Activated CD4-positive, alpha-beta memory T cell treated with anti-CD3 and anti-CD28 coated beads for 36 hours (primary cell): ENCODE measurements at regions of chr17 and their contacts with region 1.

Region 1: GRCh38 chr17:41665566-41666236 is 23.0 kb upstream of the EIF1 start:
- DNase-seq: peak; percentile 94
- H3K4me3 Mint-ChIP-seq: peak overlapping the region; percentile 76
- H3K27ac Mint-ChIP-seq: peak overlapping the region; percentile 95
- H3K4me1 Mint-ChIP-seq: peaks cover 42% of the 10 kb centered on the region
- H3K27me3 Mint-ChIP-seq: no peaks in the 10 kb centered on the region

Region 2: DNA sequence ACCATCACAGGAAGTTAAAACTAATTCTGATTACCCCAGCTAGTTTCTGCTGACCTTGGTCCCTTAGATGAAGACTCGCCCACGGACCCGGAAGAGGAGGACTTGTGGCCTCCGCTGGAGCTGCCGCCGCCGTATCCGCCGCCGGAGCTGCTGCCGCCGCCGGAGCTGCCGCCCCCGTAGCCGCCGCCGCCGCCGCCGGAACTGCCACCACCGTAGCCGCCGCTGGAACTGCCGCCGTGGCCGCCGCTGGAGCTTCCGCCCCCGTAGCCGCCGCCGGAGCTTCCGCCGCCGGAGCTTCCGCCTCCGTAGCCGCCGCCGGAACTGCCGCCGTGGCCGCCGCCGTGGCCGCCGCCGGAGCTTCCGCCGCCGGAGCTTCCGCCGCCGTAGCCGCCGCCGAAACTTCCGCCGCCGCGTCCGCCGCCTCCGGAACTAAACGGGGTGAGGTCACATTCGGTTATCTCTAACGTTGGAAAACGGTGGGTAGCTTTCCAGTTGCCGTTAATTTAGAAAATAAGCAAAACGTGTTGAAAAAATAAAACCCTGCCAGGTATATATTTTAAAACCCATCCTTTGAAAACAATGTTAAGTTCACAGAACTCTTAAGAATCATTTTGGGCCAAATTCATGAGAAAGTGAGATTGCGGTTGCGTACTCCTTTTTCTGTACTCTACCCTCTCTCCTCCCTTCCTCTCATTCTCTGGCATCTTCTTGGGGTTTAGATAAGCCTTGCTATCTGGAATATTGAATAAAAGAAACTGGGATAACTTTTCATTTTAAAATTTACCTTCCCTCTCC is 846.8 kb before region 1 on chr17:
- CTCF ChIA-PET with region 1: interaction called, 13 read pairs
- POLR2A ChIA-PET with region 1: no interaction called
- intact Hi-C with region 1: loop called (anchors 5 kb)
- DNase-seq: peak; percentile 91
- H3K4me3 Mint-ChIP-seq: peak overlapping the region; percentile 87
- H3K27ac Mint-ChIP-seq: peak overlapping the region; percentile 94
- H3K4me1 Mint-ChIP-seq: peaks cover 18% of the 10 kb centered on the region
- H3K27me3 Mint-ChIP-seq: peaks cover 7% of the 10 kb centered on the region

Region 3: DNA sequence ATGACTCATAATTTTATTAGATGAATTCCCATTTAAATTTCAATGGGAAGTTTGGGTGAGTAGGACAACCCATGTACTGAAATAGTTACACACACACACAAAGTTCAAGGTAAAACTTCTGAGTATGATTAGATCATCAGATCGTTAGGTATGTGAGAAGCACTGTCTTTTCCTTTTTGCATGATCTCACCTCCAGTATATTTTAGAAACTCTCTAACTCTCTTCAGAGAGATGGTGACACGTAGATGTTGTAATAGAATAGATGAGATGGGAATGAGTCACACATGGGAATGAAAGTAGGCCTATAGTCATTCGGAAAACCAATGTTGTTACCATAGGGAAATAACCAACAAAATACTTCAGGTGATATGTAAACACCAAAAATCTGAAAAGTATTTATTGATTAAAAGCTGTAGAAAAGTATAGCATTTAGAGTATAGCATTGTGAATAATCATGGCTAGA is 750.5 kb before region 1 on chr17:
- CTCF ChIA-PET with region 1: interaction called, 28 read pairs
- POLR2A ChIA-PET with region 1: no interaction called
- intact Hi-C with region 1: no loop called
- DNase-seq: no peak
- H3K4me3 Mint-ChIP-seq: no peak overlapping the region
- H3K27ac Mint-ChIP-seq: no peak overlapping the region
- H3K4me1 Mint-ChIP-seq: peaks cover 7% of the 10 kb centered on the region
- H3K27me3 Mint-ChIP-seq: peaks cover 3% of the 10 kb centered on the region

Region 4: DNA sequence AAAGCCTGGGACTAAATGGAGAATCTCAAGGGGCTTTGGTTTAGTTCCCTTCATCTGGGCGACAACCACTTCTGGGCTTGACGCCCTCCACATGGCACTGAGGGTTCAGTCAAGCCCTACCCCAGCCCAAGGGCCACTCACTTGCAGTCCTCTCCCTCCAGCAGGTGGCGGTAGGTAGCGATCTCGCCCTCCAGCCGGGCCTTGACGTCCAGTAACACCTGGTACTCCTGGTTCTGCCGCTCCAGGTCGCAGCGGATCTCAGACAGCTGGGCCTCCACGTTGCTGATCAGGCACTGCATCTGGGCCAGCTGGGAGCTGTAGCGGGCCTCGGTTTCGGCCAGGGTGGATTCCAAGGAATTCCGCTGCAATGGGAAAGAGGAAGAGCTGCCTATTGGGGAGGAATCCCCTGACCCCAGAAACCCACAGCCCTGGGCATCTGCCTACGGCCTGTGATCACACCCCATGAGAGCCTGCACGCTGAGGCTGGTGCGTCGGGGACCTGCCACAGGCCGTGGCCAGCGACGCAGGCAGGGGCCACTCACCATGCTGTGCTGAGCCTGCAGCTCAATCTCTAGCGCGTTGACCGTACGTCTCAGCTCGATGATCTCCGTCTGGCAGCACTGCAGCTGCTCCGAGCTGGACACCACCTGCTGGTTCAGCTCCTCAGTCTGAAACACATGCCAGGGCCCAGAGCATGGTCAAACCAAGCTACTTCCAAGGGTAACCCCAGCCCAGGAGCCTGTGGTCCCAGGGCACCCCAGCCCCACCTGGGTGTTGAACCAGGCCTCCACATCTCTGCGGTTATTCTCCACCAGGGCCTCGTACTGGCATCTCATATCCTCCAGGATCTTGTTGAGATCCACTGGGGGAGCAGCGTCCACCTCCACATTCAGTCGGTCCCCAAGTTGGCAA is 178.6 kb before region 1 on chr17:
- CTCF ChIA-PET with region 1: interaction called, 15 read pairs
- POLR2A ChIA-PET with region 1: no interaction called
- intact Hi-C with region 1: no loop called
- DNase-seq: peak; percentile 60
- H3K4me3 Mint-ChIP-seq: no peak overlapping the region
- H3K27ac Mint-ChIP-seq: no peak overlapping the region
- H3K4me1 Mint-ChIP-seq: peaks cover 9% of the 10 kb centered on the region
- H3K27me3 Mint-ChIP-seq: no peaks in the 10 kb centered on the region

Region 5: GRCh38 chr17:41559548-41559947 is 106.2 kb before region 1 on chr17:
- CTCF ChIA-PET with region 1: interaction called, 13 read pairs
- POLR2A ChIA-PET with region 1: no interaction called
- intact Hi-C with region 1: no loop called
- DNase-seq: no peak
- H3K4me3 Mint-ChIP-seq: no peak overlapping the region
- H3K27ac Mint-ChIP-seq: no peak overlapping the region
- H3K4me1 Mint-ChIP-seq: no peaks in the 10 kb centered on the region
- H3K27me3 Mint-ChIP-seq: peaks cover 23% of the 10 kb centered on the region

Region 6: DNA sequence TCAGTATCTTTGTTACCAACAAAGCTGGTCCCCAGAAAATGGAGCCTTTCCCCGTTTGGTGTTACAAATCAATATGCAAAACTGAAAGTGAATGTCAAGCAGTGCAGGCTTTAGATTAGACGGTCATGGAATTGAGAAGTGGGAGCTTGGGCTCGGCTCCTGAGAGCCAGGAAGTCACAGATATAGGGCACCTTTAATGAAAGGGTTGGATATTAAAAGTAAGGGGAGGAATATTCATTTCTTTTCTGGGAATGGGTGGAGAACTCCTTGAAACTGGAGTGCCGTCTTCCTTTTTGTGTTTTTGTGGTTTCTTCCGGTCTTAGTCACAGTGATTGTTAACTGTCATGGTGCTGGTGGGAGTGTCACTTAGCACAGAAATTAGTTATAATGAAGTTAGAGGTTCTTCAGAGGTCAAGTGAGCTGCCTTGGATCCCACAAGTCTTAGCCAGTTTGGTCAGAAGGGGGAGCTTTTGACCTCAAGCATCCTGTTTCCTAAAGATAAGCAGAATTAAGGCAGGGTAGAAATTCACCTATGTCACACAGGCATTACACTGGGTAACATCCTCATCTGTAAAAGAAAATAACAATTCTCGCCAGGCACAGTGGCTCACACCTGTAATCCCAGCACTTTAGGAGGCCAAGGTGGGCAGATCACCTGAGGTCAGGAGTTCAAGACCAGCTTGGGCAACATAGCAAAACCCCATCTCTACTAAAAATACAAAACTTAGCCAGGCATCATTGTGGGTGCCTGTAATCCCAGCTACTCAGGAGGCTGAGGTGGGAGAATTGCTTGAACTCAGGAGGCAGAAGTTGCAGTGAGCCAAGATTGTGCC is 13.4 kb after region 1 on chr17:
- CTCF ChIA-PET with region 1: interaction called, 118 read pairs
- POLR2A ChIA-PET with region 1: interaction called, 27 read pairs
- intact Hi-C with region 1: loop called (anchors 1 kb)
- DNase-seq: peak; percentile 81
- H3K4me3 Mint-ChIP-seq: peak overlapping the region; percentile 79
- H3K27ac Mint-ChIP-seq: peak overlapping the region; percentile 97
- H3K4me1 Mint-ChIP-seq: peaks cover 41% of the 10 kb centered on the region
- H3K27me3 Mint-ChIP-seq: no peaks in the 10 kb centered on the region

Region 7: GRCh38 chr17:41768682-41769288 is 103.1 kb after region 1 on chr17:
- CTCF ChIA-PET with region 1: no interaction called
- POLR2A ChIA-PET with region 1: no interaction called
- intact Hi-C with region 1: no loop called
- DNase-seq: no peak
- H3K4me3 Mint-ChIP-seq: no peak overlapping the region
- H3K27ac Mint-ChIP-seq: no peak overlapping the region
- H3K4me1 Mint-ChIP-seq: no peaks in the 10 kb centered on the region
- H3K27me3 Mint-ChIP-seq: peaks cover 4% of the 10 kb centered on the region